Vagina (tissue), 2 donors: ENCODE measurements at regions of chr2 and their contacts with region 1.

Region 1: DNA sequence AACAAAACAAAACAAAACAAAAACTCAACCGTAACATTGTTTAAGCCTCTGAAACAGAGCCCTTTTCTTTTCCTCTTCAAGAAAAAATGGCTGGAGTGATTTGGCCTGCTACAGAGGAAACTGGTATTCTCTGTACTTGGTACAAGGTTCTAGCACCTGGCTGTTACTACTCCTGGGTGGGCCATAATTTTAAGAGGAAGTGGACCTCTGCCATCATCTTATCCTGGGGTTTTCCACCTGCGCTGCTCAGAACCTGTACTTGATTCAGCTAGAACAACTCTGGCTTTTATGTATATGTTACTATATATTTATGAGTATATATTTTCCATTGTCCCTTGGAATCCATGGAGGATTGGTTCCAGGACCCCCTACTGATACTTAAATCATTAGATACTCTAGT is 22.5 kb downstream of the SRSF7 start:
- DNase-seq: no peak
- H3K4me3 ChIP-seq: no peak overlapping the region
- H3K27ac ChIP-seq: no peak overlapping the region
- H3K4me1 ChIP-seq: no peaks in the 10 kb centered on the region
- H3K27me3 ChIP-seq: no peaks in the 10 kb centered on the region
- CTCF ChIP-seq: no peak
- POLR2A ChIP-seq: no peak

Region 2: GRCh38 chr2:38581193-38582147 is 147.2 kb before region 1 on chr2:
- intact Hi-C with region 1: loop called (anchors 5 kb)
- DNase-seq: no peak
- H3K4me3 ChIP-seq: no peak overlapping the region
- H3K27ac ChIP-seq: no peak overlapping the region
- H3K4me1 ChIP-seq: peaks cover 9% of the 10 kb centered on the region
- H3K27me3 ChIP-seq: no peaks in the 10 kb centered on the region
- CTCF ChIP-seq: peak; percentile 42 to 73 (median 67)
- POLR2A ChIP-seq: no peak